PC-9 (cell line): ENCODE measurements at regions of chr11 and their contacts with region 1.

Region 1: GRCh38 chr11:103682318-103683184 is 353.9 kb upstream of the DDI1 start:
- DNase-seq: peak; percentile 49 to 51
- H3K4me3 ChIP-seq: no peak overlapping the region
- H3K27ac ChIP-seq: no peak overlapping the region
- H3K4me1 ChIP-seq: no peaks in the 10 kb centered on the region
- H3K27me3 ChIP-seq: no peaks in the 10 kb centered on the region
- CTCF ChIP-seq: peak; percentile 92

Region 2: GRCh38 chr11:103609117-103610066 is 73.2 kb before region 1 on chr11:
- CTCF ChIA-PET with region 1: no interaction called
- POLR2A ChIA-PET with region 1: no interaction called
- intact Hi-C with region 1: loop called (anchors 5 kb)
- DNase-seq: peak; percentile 50 to 66
- H3K4me3 ChIP-seq: no peak overlapping the region
- H3K27ac ChIP-seq: 0 out of 2 replicates have a peak overlapping the region, but pooled peaks have one; percentile 2
- H3K4me1 ChIP-seq: peaks cover 13% of the 10 kb centered on the region
- H3K27me3 ChIP-seq: no peaks in the 10 kb centered on the region
- CTCF ChIP-seq: peak; percentile 62

Region 3: GRCh38 chr11:104164028-104164520 is 481.5 kb after region 1 on chr11 and contains the start of gene PDGFD:
- CTCF ChIA-PET with region 1: no interaction called
- POLR2A ChIA-PET with region 1: no interaction called
- intact Hi-C with region 1: loop called (anchors 5 kb)
- DNase-seq: peak; percentile 70 to 76
- H3K4me3 ChIP-seq: peak within 1 kb of the TSS; percentile 69
- H3K27ac ChIP-seq: peak within 1 kb of the TSS; percentile 28
- H3K4me1 ChIP-seq: peaks cover 15% of the 10 kb centered on the region
- H3K27me3 ChIP-seq: no peaks in the 10 kb centered on the region
- CTCF ChIP-seq: peak; percentile 61
- total RNA-seq, gene PDGFD: 6.1 and 6.9 TPM in 2 replicates